A673 (cell line): ENCODE measurements at regions of chr12 and their contacts with region 1.

Region 1: GRCh38 chr12:89154743-89155499 is 197.4 kb downstream of the DUSP6 start:
- DNase-seq: no peak
- H3K4me3 ChIP-seq: no peak overlapping the region
- H3K27ac ChIP-seq: peak overlapping the region; percentile 76
- H3K4me1 ChIP-seq: peaks cover 53% of the 10 kb centered on the region
- H3K27me3 ChIP-seq: no peaks in the 10 kb centered on the region
- CTCF ChIP-seq: peak; percentile 29; the same call in 1 of the 2 replicates

Region 2: DNA sequence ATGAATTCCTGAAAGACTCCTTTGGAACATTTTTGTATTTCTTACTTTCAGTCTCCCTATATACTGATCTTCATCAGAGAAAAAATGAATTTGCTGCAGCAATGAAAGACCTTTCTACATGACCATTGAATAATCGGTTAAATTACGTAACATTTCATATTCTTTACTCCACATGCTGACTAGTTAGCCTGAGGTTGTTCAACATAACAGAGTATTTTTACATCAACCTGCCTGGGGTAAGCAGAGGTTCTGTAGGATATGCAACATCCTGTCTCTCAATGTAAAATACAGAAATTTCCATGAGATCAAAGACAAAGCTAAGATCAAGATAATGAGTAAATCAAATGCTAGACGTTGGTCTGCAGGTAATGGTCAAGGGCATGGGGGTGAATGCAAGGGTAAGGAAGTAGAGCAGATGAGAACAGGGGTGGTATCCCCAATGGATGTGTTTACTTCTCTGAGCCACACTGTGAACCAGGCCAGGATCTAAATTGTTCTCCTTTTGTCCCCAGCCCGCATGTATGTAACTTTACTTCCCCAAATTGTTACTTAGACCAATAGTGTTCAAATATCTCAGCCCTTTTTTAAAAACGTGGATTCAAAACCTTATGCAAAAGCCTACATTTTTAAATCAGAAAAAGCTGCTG is 152.0 kb after region 1 on chr12:
- CTCF ChIA-PET with region 1: interaction called, 12 read pairs
- POLR2A ChIA-PET with region 1: no interaction called
- intact Hi-C with region 1: no loop called
- DNase-seq: no peak
- H3K4me3 ChIP-seq: no peak overlapping the region
- H3K27ac ChIP-seq: peak overlapping the region; percentile 87
- H3K4me1 ChIP-seq: peaks cover 59% of the 10 kb centered on the region
- H3K27me3 ChIP-seq: no peaks in the 10 kb centered on the region
- CTCF ChIP-seq: no peak